ENCODE measurements at regions of chr4 and their contacts with region 1.

Region 1: GRCh38 chr4:83074086-83074704 is 39.2 kb downstream of the COPS4 start:
- DNase-seq: no peak
- ATAC-seq: peak in 1 of 2 donors; percentile 58

Region 2: GRCh38 chr4:83252782-83253405 is 178.7 kb after region 1 on chr4:
- intact Hi-C with region 1: loop called in 1 of 2 experiments (anchors 10 kb)
- DNase-seq: peak; percentile 61
- ATAC-seq: peak in 1 of 2 donors; percentile 29

Region 3: GRCh38 chr4:83334425-83335241 is 260.4 kb after region 1 on chr4 and contains the start of gene HPSE:
- intact Hi-C with region 1: no loop called
- DNase-seq: peak; percentile 82
- ATAC-seq: peak; percentile 89 to 98
- total RNA-seq, gene HPSE: 2.3 to 3.9 TPM

Region 4: DNA sequence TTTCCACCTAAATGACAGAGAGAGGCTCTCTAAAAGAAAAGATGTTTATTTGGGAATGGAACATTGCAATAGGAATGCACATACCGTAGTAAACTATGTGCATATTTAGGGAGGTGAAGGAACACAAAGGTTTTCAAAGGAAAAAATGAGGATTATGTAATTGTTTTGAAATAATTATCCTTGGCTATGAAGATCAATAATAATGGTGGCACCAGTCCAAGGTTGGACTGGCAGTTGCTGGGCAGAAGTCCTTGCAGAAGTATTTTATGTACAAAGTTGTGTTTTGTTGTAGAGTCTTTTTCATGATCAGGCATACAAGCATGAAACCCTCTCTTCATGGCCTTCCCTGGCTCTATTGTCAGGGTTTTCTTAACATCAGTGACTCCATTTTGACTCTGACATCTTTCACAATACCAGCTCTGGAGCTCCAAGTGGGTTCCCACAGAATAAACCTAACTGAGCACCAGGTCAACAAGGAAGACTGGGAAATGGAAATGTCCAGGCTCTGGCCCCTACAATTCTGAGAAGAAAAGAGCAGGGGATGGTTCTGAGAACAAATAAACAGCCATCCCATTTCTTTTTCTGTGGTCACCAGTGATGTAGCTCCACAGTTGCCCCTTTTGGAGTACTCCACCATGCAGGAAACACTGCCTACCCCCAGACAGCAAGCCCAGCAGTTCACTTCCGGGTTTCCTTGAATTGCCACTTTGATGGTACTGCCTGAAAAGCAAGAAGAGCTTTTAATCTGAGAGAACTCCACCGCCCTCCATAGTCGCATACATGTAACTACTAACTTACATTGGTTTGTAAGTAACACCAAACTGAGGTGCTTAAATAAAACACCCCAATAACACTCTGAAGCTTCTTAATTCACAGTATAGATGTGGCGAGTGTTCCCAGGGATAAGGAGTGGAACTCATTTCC is 313.8 kb after region 1 on chr4:
- intact Hi-C with region 1: no loop called
- DNase-seq: no peak
- ATAC-seq: no peak